ENCODE measurements at regions of chr1 and their contacts with region 1.

Region 1: DNA sequence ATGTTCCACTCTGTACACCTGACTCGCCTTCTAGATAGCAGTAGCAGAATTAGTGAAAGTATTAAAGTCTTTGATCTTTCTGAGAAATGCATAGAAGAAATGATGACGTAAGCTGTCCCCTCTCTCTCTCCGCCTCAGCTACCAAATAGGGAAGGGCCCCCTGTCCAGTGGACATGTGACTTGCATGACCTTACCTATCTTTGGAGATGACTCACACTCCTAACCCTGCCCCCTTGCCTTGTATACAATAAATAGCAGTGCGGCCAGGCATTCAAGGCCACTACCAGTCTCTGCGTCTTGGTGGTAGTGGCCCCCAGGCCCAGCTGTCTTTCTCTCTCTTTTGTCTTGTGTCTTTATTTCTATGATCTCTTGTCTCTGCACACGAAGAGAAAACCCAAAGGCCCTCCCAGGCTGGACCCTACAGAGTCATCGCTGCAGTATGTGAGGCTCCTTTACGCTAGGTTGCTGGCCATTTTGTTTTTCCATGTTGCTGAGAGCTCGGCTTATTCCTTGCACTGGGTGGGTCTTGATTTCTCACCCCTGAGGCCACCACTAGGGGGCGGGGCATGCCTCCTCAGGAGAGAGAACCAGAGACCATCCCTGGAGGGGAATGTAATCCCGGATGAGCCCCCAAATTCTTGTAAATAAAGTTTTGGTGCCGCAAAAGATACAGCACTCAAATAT is 16.0 kb upstream of the ZBTB8B start:
- DNase-seq: peak; percentile 18
- H3K4me3 ChIP-seq: no peak overlapping the region
- H3K27ac ChIP-seq: no peak overlapping the region
- H3K4me1 ChIP-seq: peaks cover 4% of the 10 kb centered on the region
- H3K27me3 ChIP-seq: peaks cover 0 to under 1% of the 10 kb centered on the region in 2 experiments
- CTCF ChIP-seq: peak; percentile 27 to 40
- POLR2A ChIP-seq: no peak

Region 2: GRCh38 chr1:32394141-32394889 is 54.6 kb before region 1 on chr1 and contains the start of gene BSDC1:
- CTCF ChIA-PET with region 1: no interaction called
- POLR2A ChIA-PET with region 1: no interaction called
- dilution Hi-C with region 1: no loop called
- intact Hi-C with region 1: no loop called
- DNase-seq: peak; percentile 99
- H3K4me3 ChIP-seq: peak within 1 kb of the TSS; percentile 56 to 76 (median 65)
- H3K27ac ChIP-seq: peak within 1 kb of the TSS; percentile 60
- H3K4me1 ChIP-seq: peaks cover 15% of the 10 kb centered on the region
- H3K27me3 ChIP-seq: no peaks in the 10 kb centered on the region
- CTCF ChIP-seq: no peak
- POLR2A ChIP-seq: no peak
- total RNA-seq, gene BSDC1: 64.6 and 64.8 TPM in 2 replicates

Region 3: DNA sequence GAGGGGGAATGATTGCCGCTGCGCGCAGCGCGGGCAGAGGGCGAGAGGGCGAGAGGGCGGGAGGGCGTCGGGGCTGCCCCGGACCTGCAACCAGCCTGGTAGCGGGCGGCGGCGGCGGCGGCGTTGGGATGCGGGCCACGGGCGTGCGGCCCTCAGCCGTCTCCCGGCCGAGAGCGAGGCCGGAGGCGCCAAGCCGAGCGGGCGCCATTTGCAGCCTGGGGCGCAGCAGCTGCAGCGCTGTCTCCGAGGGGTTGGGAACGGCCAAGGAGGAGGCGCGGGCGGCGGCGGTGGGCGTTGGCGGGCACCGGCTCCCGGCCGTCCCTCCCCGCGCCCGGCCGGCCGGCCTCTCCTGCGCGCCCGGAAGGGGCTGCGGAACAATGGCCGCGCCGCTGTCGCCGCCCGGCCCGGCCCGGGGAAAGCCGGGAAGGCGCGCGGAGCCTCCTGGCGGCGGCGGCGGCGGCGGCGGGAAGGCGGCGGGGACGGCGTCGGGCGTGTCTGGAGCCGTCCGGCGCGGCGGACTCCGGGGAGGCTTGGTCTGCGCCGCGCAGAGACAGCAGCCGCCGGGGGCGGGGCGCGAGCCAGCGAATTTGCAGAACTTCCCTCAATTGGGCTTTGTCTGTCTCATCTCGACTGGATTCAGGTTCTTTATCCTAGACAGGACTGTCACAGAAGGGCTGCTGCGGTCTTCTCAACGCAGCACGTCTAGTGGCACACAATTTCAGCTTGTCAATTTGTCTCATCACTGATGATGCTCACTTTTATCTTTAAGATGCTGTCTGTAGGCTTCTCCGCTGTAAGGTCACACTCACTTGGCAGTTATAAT is 51.7 kb after region 1 on chr1:
- CTCF ChIA-PET with region 1: interaction called, 3 read pairs
- POLR2A ChIA-PET with region 1: no interaction called
- dilution Hi-C with region 1: no loop called
- intact Hi-C with region 1: loop called (anchors 2 kb)
- DNase-seq: peak; percentile 49
- H3K4me3 ChIP-seq: peak overlapping the region; percentile 48 to 83 (median 74)
- H3K27ac ChIP-seq: peak overlapping the region; percentile 55
- H3K4me1 ChIP-seq: peaks cover 30% of the 10 kb centered on the region
- H3K27me3 ChIP-seq: no peaks in the 10 kb centered on the region
- CTCF ChIP-seq: no peak
- POLR2A ChIP-seq: peak; percentile 73

Region 4: GRCh38 chr1:32612189-32612881 is 163.4 kb after region 1 on chr1:
- CTCF ChIA-PET with region 1: interaction called, 4 read pairs
- POLR2A ChIA-PET with region 1: no interaction called
- dilution Hi-C with region 1: no loop called
- intact Hi-C with region 1: loop called (anchors 2 kb)
- DNase-seq: peak; percentile 86
- H3K4me3 ChIP-seq: peak overlapping the region; percentile 9 to 48 (median 44)
- H3K27ac ChIP-seq: peak overlapping the region; percentile 29
- H3K4me1 ChIP-seq: no peaks in the 10 kb centered on the region
- H3K27me3 ChIP-seq: no peaks in the 10 kb centered on the region
- CTCF ChIP-seq: peak in 1 of 2 donors; percentile 56
- POLR2A ChIP-seq: peak; percentile 90

Region 5: DNA sequence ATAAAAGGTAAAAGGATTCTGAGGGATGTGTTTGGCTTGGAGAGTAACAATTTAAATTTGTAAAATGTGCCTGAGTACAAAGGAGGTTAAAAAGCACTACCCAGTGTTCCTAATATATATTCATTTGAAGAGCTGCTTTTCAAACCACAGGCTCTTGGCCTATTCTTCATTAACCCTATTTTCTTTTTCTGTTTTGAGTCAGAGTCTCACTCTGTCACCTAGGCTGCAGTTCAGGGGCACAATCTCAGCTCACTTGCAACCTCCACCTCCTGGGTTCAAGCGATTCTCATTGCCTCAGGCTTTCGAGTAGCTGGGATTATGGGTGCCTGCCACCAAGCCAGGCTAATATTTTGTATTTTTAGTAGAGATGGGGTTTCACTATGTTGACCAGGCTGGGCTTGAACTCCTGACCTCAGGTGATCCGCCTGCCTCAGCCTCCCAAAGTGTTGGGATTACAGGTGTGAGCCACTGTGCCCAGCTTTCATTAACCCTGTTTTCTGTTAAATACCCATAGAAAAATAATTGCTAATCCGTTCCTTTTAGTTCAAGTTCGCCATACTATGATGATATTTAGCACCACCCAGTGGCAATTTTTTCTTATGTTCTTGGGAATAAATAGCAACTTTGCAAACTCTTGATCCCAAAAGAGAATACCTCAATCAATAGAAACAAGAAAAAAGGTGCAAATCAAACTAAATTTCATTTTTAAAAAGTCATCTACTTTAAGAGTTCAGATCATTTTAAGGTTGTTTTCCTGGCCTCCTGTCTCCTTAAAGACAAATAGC is 171.0 kb after region 1 on chr1:
- CTCF ChIA-PET with region 1: interaction called, 24 read pairs
- POLR2A ChIA-PET with region 1: no interaction called
- dilution Hi-C with region 1: no loop called
- intact Hi-C with region 1: no loop called
- DNase-seq: peak; percentile 45
- H3K4me3 ChIP-seq: no peak overlapping the region
- H3K27ac ChIP-seq: no peak overlapping the region
- H3K4me1 ChIP-seq: no peaks in the 10 kb centered on the region
- H3K27me3 ChIP-seq: no peaks in the 10 kb centered on the region
- CTCF ChIP-seq: no peak
- POLR2A ChIP-seq: no peak

Region 6: DNA sequence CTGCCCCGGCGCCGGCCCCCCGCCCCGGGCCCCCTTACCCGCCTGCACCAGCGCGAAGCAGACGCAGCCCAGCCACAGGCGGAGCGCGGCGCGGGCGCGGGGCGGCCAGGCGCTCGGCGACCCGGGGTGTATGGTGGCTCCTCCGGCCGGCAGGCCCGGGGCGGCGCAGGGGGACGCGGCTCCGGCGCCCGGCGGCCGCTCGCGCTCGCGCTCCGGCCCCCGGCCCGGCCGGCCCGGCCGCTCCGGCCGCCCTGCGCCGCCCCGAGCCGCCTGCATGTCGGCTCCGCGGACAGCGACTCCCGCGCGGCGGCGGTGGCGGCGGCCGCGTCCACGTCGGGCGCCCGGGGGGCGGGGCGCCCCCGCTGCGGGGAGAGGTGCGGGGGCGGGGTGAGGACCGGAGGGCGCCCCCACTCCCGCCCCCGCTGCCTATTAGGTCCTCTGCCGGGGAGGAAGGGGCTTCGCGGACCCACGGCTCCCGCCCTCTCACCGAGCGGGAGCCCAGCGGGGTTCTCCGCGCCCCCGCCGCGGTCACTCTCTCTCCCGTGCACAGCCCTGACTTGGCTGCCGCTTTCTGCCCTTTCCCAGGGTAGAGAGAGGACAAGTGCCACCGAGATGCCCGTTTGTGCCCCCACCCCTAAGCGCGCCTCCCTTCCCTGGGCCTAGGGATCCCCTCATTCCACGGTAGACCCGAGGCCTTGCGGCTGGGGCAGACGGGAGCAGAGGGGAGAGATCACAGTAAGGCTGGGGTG is 421.9 kb after region 1 on chr1 and contains the start of gene FNDC5:
- CTCF ChIA-PET with region 1: no interaction called
- POLR2A ChIA-PET with region 1: no interaction called
- dilution Hi-C with region 1: no loop called
- intact Hi-C with region 1: loop called (anchors 1 kb)
- DNase-seq: no peak
- H3K4me3 ChIP-seq: peak within 1 kb of the TSS in 1 of 3 experiments; percentile 36
- H3K27ac ChIP-seq: no peak within 1 kb of the TSS
- H3K4me1 ChIP-seq: no peaks in the 10 kb centered on the region
- H3K27me3 ChIP-seq: peaks cover 14 to 17% of the 10 kb centered on the region in 2 experiments
- CTCF ChIP-seq: no peak
- POLR2A ChIP-seq: no peak
- total RNA-seq, gene FNDC5: 0.64 TPM in 1 of 2 replicates, not detected in the other

Measured in endothelial cell of umbilical vein (primary cell).